GM18951 (cell line): ENCODE measurements at regions of chr3 and their contacts with region 1.

Region 1: GRCh38 chr3:45656575-45657363 is 32.4 kb upstream of the SACM1L start:
- POLR2A ChIP-seq: no peak

Region 2: GRCh38 chr3:45011756-45012508 is 644.8 kb before region 1 on chr3:
- in situ Hi-C with region 1: no loop called
- POLR2A ChIP-seq: no peak

Region 3: GRCh38 chr3:45037734-45038455 is 618.9 kb before region 1 on chr3:
- in situ Hi-C with region 1: loop called (anchors 25 kb)
- POLR2A ChIP-seq: no peak

Region 4: GRCh38 chr3:45507820-45508317 is 148.9 kb before region 1 on chr3:
- in situ Hi-C with region 1: loop called (anchors 10 kb)
- POLR2A ChIP-seq: no peak

Region 5: DNA sequence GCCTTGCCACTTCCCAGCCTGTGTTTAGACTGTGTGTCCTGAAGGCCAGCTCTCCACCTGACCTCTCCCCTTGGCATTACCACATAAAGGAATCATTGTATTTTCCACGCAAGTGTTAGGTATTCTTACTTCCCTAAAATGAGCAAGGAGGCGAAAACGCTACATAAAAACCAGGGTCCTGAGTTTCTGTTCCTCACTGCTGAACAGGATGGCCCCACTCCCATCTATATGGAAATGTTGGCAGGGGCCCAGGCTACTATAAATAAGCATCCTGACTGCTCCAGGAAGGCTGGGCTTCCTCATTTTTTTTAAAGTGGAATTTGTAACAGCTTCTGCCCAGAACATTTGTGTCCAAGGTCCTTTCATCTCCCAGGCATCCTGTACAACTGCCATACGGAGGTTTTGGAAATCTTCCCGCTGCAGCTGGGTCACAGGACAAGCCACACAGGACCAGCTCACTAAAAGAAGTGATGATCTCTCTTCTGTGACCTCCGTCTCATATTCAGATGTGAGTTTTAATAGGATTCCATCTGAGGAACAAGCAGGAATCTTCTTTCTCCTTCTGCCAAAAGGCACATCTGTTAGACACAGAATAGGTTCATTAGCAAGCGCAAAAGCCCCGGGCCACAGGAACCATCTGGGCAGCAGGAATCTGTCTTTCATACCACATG is 118.7 kb before region 1 on chr3:
- in situ Hi-C with region 1: loop called (anchors 10 kb)
- POLR2A ChIP-seq: no peak